Vagina (tissue), 2 donors: ENCODE measurements at regions of chr5 and their contacts with region 1.

Region 1: GRCh38 chr5:36414869-36415282 is 113.2 kb upstream of the RANBP3L start:
- DNase-seq: no peak
- H3K4me3 ChIP-seq: no peak overlapping the region
- H3K27ac ChIP-seq: no peak overlapping the region
- H3K4me1 ChIP-seq: peaks cover 8% of the 10 kb centered on the region
- H3K27me3 ChIP-seq: no peaks in the 10 kb centered on the region
- CTCF ChIP-seq: peak in 1 of 3 experiments; percentile 17
- POLR2A ChIP-seq: no peak

Region 2: GRCh38 chr5:36373527-36374086 is 41.3 kb before region 1 on chr5:
- intact Hi-C with region 1: no loop called
- DNase-seq: peak in 1 of 2 donors; percentile 94
- H3K4me3 ChIP-seq: no peak overlapping the region
- H3K27ac ChIP-seq: peak overlapping the region; percentile 47
- H3K4me1 ChIP-seq: peaks cover 11% of the 10 kb centered on the region
- H3K27me3 ChIP-seq: no peaks in the 10 kb centered on the region
- CTCF ChIP-seq: no peak
- POLR2A ChIP-seq: no peak

Region 3: DNA sequence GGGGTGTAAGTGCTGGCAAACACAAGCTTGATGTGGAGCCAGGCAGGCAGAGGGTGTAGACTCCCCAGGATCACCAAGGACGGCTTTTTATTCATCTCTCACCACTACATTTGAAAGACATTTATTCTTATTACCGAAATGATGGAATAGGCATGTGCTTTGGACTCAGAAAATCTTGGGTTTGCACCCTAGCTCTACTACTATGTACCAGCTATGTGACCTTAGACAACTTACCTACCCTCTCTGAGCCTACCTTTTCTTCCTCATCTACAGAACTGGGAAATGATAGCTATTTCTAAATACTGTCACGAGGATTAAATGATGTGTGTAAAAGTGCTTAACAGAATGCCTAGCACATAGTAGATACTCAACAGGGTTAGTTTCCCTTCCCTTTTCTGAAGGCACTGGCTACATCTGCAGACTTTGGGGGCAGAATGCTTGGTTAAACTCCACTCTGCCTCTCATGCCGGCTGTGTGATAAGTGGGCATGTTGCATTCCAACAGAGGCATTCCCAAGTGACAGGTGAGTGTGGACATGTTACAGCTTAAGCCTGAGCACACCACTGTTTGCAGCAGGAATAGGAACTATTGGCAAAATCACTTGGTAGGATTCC is 286.3 kb after region 1 on chr5:
- intact Hi-C with region 1: loop called (anchors 5 kb)
- DNase-seq: no peak
- H3K4me3 ChIP-seq: no peak overlapping the region
- H3K27ac ChIP-seq: no peak overlapping the region
- H3K4me1 ChIP-seq: no peaks in the 10 kb centered on the region
- H3K27me3 ChIP-seq: no peaks in the 10 kb centered on the region
- CTCF ChIP-seq: no peak
- POLR2A ChIP-seq: no peak